ENCODE measurements at regions of chr22 and their contacts with region 1.

Region 1: GRCh38 chr22:30662040-30662439 is 5.6 kb downstream of the DUSP18 start:
- DNase-seq: no peak
- H3K4me3 ChIP-seq: no peak overlapping the region
- H3K27ac ChIP-seq: no peak overlapping the region
- H3K4me1 ChIP-seq: peaks cover 6% of the 10 kb centered on the region
- H3K27me3 ChIP-seq: no peaks in the 10 kb centered on the region
- CTCF ChIP-seq: no peak

Region 2: GRCh38 chr22:30574997-30575671 is 86.9 kb before region 1 on chr22:
- CTCF ChIA-PET with region 1: no interaction called
- dilution Hi-C with region 1: loop called (anchors 5 kb)
- in situ Hi-C with region 1: no loop called
- intact Hi-C with region 1: no loop called
- DNase-seq: no peak
- H3K4me3 ChIP-seq: no peak overlapping the region
- H3K27ac ChIP-seq: no peak overlapping the region
- H3K4me1 ChIP-seq: no peaks in the 10 kb centered on the region
- H3K27me3 ChIP-seq: no peaks in the 10 kb centered on the region
- CTCF ChIP-seq: no peak

Region 3: DNA sequence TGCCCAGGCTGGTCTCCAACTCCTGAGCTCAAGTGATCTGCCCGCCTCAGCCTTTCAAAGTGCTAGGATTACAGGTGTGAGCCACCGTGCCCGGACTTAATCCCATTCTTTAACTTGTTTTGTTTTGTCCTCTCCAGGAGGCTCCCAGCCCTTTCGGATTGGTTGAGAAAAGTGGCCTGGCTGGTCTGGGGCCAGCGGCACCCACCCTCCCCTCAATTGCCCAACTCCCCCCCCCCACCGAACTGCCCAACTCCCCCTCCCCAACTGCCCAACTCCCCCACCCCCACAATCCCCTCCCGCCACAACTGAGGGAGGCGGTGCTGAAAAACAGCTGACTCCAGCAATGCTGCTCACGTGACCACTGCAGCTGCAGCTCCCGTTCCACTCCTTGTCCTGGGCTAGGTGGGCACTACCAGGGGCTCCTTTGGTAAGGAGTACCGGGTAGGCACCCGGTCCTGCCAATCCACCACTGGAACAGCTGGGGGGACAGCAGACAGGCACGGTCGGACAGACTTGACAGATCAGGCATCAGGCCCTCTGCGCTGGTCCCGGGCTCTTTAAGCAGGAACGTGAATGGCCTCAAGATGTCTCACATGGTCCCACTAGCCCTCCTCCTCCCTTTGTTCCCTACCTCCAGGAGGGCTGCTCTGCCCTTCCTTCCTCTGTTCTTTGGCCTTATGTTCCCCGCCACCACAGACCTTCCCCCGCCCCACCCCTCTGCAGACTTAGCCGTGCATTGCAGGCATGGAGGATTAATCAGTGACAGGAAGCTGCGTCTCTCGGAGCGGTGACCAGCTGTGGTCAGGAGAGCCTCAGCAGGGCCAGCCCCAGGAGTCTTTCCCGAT is 55.4 kb before region 1 on chr22 and contains the start of gene TCN2:
- CTCF ChIA-PET with region 1: no interaction called
- dilution Hi-C with region 1: no loop called
- in situ Hi-C with region 1: no loop called
- intact Hi-C with region 1: no loop called
- DNase-seq: peak; percentile 64
- H3K4me3 ChIP-seq: peak within 1 kb of the TSS; percentile 27 to 48 (median 45)
- H3K27ac ChIP-seq: no peak within 1 kb of the TSS
- H3K4me1 ChIP-seq: peaks cover 16% of the 10 kb centered on the region
- H3K27me3 ChIP-seq: no peaks in the 10 kb centered on the region
- CTCF ChIP-seq: no peak
- total RNA-seq, gene TCN2: 3.6 to 9.3 TPM

Region 4: GRCh38 chr22:30742291-30743256 is 80.5 kb after region 1 on chr22:
- CTCF ChIA-PET with region 1: no interaction called
- dilution Hi-C with region 1: loop called (anchors 5 kb)
- in situ Hi-C with region 1: no loop called
- intact Hi-C with region 1: no loop called
- DNase-seq: peak; percentile 39
- H3K4me3 ChIP-seq: no peak overlapping the region
- H3K27ac ChIP-seq: no peak overlapping the region
- H3K4me1 ChIP-seq: peaks cover 5% of the 10 kb centered on the region
- H3K27me3 ChIP-seq: no peaks in the 10 kb centered on the region
- CTCF ChIP-seq: no peak